ENCODE measurements at regions of chr1 and their contacts with region 1.

Region 1: GRCh38 chr1:221203224-221204054 is 324.2 kb downstream of the HLX start:
- DNase-seq: peak; percentile 56
- ATAC-seq: peak; percentile 69; the same call in 2 of the 3 replicates
- H3K4me3 ChIP-seq: no peak overlapping the region
- H3K27ac ChIP-seq: no peak overlapping the region
- H3K4me1 ChIP-seq: no peaks in the 10 kb centered on the region
- H3K27me3 ChIP-seq: no peaks in the 10 kb centered on the region
- CTCF ChIP-seq: peak; percentile 82
- EP300 ChIP-seq: no peak
- POLR2A ChIP-seq: no peak
- RAD21 ChIP-seq: peak; percentile 34; the same call in 1 of the 2 replicates

Region 2: GRCh38 chr1:220810179-220810653 is 393.2 kb before region 1 on chr1:
- CTCF ChIA-PET with region 1: interaction called, 10 read pairs
- POLR2A ChIA-PET with region 1: no interaction called
- in situ Hi-C with region 1: no loop called
- intact Hi-C with region 1: loop called (anchors 5 kb)
- DNase-seq: peak; percentile 47
- ATAC-seq: peak; percentile 85
- H3K4me3 ChIP-seq: no peak overlapping the region
- H3K27ac ChIP-seq: no peak overlapping the region
- H3K4me1 ChIP-seq: no peaks in the 10 kb centered on the region
- H3K27me3 ChIP-seq: no peaks in the 10 kb centered on the region
- CTCF ChIP-seq: peak; percentile 79
- EP300 ChIP-seq: no peak
- POLR2A ChIP-seq: no peak
- RAD21 ChIP-seq: no peak; the same call in 1 of the 2 replicates

Region 3: DNA sequence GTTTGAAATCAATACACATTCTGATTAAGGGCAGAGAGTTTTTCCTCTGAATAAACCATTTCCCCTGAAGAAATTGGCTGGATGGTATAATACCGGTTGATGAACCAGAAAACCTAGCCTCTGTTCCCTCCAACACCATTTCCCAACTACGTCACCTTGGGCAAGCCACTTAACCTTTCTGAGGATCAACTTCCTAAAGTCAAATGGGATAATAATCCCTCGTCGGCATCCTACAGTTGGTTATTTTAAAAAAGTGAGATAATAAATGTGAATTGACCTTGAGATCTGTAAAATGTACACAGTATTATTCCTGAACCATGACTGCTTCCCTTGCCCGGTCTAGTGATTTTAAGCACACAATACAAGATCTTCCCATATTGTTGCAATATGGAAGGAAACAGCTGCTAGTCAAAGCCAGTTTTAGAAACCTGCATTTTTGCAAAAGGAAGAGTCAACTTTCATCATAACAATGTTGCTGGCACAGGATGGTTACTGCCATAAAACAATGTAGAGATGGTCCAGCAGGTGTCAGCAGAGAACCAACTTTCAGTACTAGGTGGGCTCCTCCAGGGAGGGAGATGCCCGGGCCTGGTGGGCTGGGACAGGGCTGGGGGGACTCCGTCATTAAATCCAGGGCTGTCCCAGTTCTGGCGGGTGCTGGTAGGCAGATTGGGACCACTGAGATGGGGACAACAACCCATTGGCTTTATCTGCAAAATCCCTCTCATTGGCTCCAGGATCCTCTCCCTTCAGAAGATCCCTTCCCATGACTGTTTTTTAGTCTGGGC is 329.4 kb before region 1 on chr1:
- CTCF ChIA-PET with region 1: interaction called, 24 read pairs
- POLR2A ChIA-PET with region 1: no interaction called
- in situ Hi-C with region 1: loop called (anchors 5 kb)
- intact Hi-C with region 1: loop called (anchors 1 kb)
- DNase-seq: peak; percentile 32
- ATAC-seq: peak; percentile 77
- H3K4me3 ChIP-seq: no peak overlapping the region
- H3K27ac ChIP-seq: no peak overlapping the region
- H3K4me1 ChIP-seq: peaks cover 25% of the 10 kb centered on the region
- H3K27me3 ChIP-seq: peaks cover 0 to 9% of the 10 kb centered on the region in 2 experiments; a peak in 1 of 5 replicates
- CTCF ChIP-seq: peak; percentile 81
- EP300 ChIP-seq: no peak
- POLR2A ChIP-seq: no peak
- RAD21 ChIP-seq: peak; percentile 60

Region 4: GRCh38 chr1:220908757-220909156 is 294.7 kb before region 1 on chr1:
- CTCF ChIA-PET with region 1: interaction called, 5 read pairs
- POLR2A ChIA-PET with region 1: no interaction called
- in situ Hi-C with region 1: no loop called
- intact Hi-C with region 1: loop called (anchors 1 kb)
- DNase-seq: no peak
- ATAC-seq: peak; percentile 57; the same call in 1 of the 3 replicates
- H3K4me3 ChIP-seq: no peak overlapping the region
- H3K27ac ChIP-seq: no peak overlapping the region
- H3K4me1 ChIP-seq: no peaks in the 10 kb centered on the region
- H3K27me3 ChIP-seq: peaks cover 2 to 31% of the 10 kb centered on the region in 2 experiments; a peak in 3 of 5 replicates
- CTCF ChIP-seq: peak; percentile 54
- EP300 ChIP-seq: no peak
- POLR2A ChIP-seq: no peak
- RAD21 ChIP-seq: 0 out of 2 replicates have a peak, but pooled peaks have one; percentile 22

Region 5: GRCh38 chr1:221166559-221167318 is 36.7 kb before region 1 on chr1:
- CTCF ChIA-PET with region 1: no interaction called
- POLR2A ChIA-PET with region 1: no interaction called
- in situ Hi-C with region 1: no loop called
- intact Hi-C with region 1: no loop called
- DNase-seq: no peak
- ATAC-seq: no peak
- H3K4me3 ChIP-seq: no peak overlapping the region
- H3K27ac ChIP-seq: no peak overlapping the region
- H3K4me1 ChIP-seq: no peaks in the 10 kb centered on the region
- H3K27me3 ChIP-seq: no peaks in the 10 kb centered on the region
- CTCF ChIP-seq: no peak
- EP300 ChIP-seq: no peak
- POLR2A ChIP-seq: no peak
- RAD21 ChIP-seq: no peak